IMR-90 (cell line): ENCODE measurements at regions of chr12 and their contacts with region 1.

Region 1: DNA sequence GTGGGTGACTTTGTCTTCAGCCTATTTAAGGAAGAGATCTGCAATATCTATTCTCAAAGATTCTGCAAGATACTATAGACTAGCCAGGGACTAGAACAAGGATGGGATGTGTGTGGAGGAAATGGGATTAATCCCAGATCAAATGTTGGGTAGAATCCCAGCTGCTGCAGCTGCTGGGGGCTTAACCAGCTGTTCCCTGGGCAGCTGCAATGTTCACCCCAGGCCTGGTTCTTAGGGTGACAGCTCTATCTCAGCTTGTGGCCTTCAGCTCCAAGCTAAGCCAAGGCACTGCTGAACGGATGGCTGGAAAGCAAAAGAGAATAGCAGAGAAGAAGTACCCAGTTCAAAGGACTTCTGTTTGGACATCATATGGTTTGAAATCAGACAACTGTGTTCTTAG is 10.0 kb upstream of the RHEBL1 start:
- DNase-seq: no peak
- ATAC-seq: no peak
- H3K4me3 ChIP-seq: no peak overlapping the region
- H3K27ac ChIP-seq: no peak overlapping the region
- H3K4me1 ChIP-seq: no peaks in the 10 kb centered on the region
- H3K27me3 ChIP-seq: peaks cover 16% of the 10 kb centered on the region
- CTCF ChIP-seq: no peak
- POLR2A ChIP-seq: no peak
- RAD21 ChIP-seq: no peak

Region 2: GRCh38 chr12:47276621-47277309 is 1803.0 kb before region 1 on chr12:
- CTCF ChIA-PET with region 1: no interaction called
- POLR2A ChIA-PET with region 1: interaction called, 17 read pairs
- dilution Hi-C with region 1: no loop called
- in situ Hi-C with region 1: no loop called
- intact Hi-C with region 1: no loop called
- DNase-seq: peak; percentile 79
- ATAC-seq: peak; percentile 35
- H3K4me3 ChIP-seq: no peak overlapping the region
- H3K27ac ChIP-seq: peak overlapping the region; percentile 59; the same call in 1 of the 2 replicates
- H3K4me1 ChIP-seq: peaks cover 27% of the 10 kb centered on the region
- H3K27me3 ChIP-seq: no peaks in the 10 kb centered on the region
- CTCF ChIP-seq: no peak
- POLR2A ChIP-seq: no peak
- RAD21 ChIP-seq: no peak